K562 (cell line): ENCODE measurements at regions of chr10 and their contacts with region 1.

Region 1: GRCh38 chr10:77837240-77837924 is 89.2 kb downstream of the DLG5 start:
- DNase-seq: peak; percentile 62 to 84 (median 75)
- ATAC-seq: peak; percentile 88
- H3K4me3 ChIP-seq: no peak overlapping the region
- H3K27ac ChIP-seq: peak overlapping the region; percentile 93; the same call in 2 of the 3 replicates
- H3K4me1 ChIP-seq: peaks cover 21 to 31% of the 10 kb centered on the region in 2 experiments
- H3K27me3 ChIP-seq: no peaks in the 10 kb centered on the region
- CTCF ChIP-seq: peak; percentile 73 to 88 (median 88)
- EP300 ChIP-seq: no peak
- POLR2A ChIP-seq: no peak
- RAD21 ChIP-seq: peak; percentile 34 to 73

Region 2: GRCh38 chr10:77173615-77174461 is 663.5 kb before region 1 on chr10:
- CTCF ChIA-PET with region 1: no interaction called
- POLR2A ChIA-PET with region 1: no interaction called
- in situ Hi-C with region 1: no loop called
- intact Hi-C with region 1: loop called (anchors 5 kb)
- DNase-seq: peak; percentile 78 to 83 (median 81)
- ATAC-seq: peak; percentile 95
- H3K4me3 ChIP-seq: no peak overlapping the region
- H3K27ac ChIP-seq: no peak overlapping the region
- H3K4me1 ChIP-seq: no peaks in the 10 kb centered on the region
- H3K27me3 ChIP-seq: peaks cover 3 to 5% of the 10 kb centered on the region in 2 experiments; a peak in 3 of 5 replicates
- CTCF ChIP-seq: peak; percentile 90 to 96 (median 93)
- EP300 ChIP-seq: no peak
- POLR2A ChIP-seq: no peak
- RAD21 ChIP-seq: peak; percentile 77 to 87

Region 3: GRCh38 chr10:77721815-77722214 is 115.6 kb before region 1 on chr10:
- CTCF ChIA-PET with region 1: interaction called, 5 read pairs
- POLR2A ChIA-PET with region 1: no interaction called
- in situ Hi-C with region 1: no loop called
- intact Hi-C with region 1: loop called (anchors 1 kb)
- DNase-seq: no peak
- ATAC-seq: no peak
- H3K4me3 ChIP-seq: no peak overlapping the region
- H3K27ac ChIP-seq: no peak overlapping the region
- H3K4me1 ChIP-seq: no peaks in the 10 kb centered on the region
- H3K27me3 ChIP-seq: 0 out of 5 replicates have a peak, but pooled peaks cover 0 to 4% of the 10 kb centered on the region in 2 experiments
- CTCF ChIP-seq: no peak
- EP300 ChIP-seq: no peak
- POLR2A ChIP-seq: no peak
- RAD21 ChIP-seq: no peak

Region 4: GRCh38 chr10:77763453-77764430 is 73.6 kb before region 1 on chr10:
- CTCF ChIA-PET with region 1: no interaction called
- POLR2A ChIA-PET with region 1: no interaction called
- in situ Hi-C with region 1: no loop called
- intact Hi-C with region 1: loop called (anchors 2 kb)
- DNase-seq: peak in 3 of 4 experiments; percentile 9 to 19 (median 14)
- ATAC-seq: peak; percentile 84
- H3K4me3 ChIP-seq: no peak overlapping the region
- H3K27ac ChIP-seq: no peak overlapping the region
- H3K4me1 ChIP-seq: peaks cover 0 to 3% of the 10 kb centered on the region in 2 experiments; a peak in 1 of 5 replicates
- H3K27me3 ChIP-seq: peaks cover 9 to 10% of the 10 kb centered on the region in 2 experiments; a peak in 4 of 5 replicates
- CTCF ChIP-seq: peak; percentile 22 to 41 (median 26); a peak in 3 of 6 replicates
- EP300 ChIP-seq: no peak
- POLR2A ChIP-seq: no peak
- RAD21 ChIP-seq: no peak

Region 5: DNA sequence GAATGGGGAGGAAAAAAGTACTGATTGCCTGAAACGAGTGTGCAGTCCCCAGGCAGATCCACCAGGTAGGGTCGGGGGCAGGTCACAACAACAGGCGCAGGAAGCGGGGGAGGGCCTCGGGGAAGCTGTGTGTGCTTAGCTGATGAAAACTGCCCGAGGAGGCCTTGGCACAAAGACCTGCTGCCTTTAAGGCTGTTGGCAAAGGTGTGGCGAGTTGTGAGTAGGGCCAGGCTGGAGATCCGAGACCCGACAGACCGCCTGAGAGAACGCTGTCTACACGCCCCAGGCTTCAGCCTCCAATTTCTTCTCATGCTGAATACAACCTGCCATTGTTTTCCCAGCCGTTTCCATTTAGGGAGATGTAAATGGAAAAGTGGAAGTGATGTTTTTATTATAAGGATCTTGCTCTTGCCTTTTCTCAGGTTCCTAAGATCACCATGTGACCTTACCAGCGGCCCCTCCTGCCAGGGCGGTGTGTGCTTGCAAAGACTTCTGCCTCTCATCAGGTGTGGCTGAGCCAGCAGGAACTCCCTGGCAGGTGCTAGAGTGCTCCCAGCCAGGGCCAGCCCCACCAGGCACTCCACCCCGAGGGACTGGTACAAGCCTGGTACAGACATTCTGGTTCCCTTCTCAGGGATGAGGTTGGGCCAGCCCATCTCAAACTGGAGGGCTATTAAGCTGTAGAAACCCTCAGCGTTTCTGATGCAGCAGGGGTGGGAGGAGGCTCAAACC is 28.4 kb after region 1 on chr10:
- CTCF ChIA-PET with region 1: no interaction called
- POLR2A ChIA-PET with region 1: interaction called, 3 read pairs
- in situ Hi-C with region 1: no loop called
- intact Hi-C with region 1: loop called (anchors 1 kb)
- DNase-seq: no peak
- ATAC-seq: peak; percentile 54
- H3K4me3 ChIP-seq: no peak overlapping the region
- H3K27ac ChIP-seq: no peak overlapping the region
- H3K4me1 ChIP-seq: peaks cover 0 to 7% of the 10 kb centered on the region in 2 experiments; a peak in 2 of 5 replicates
- H3K27me3 ChIP-seq: no peaks in the 10 kb centered on the region
- CTCF ChIP-seq: no peak
- EP300 ChIP-seq: no peak
- POLR2A ChIP-seq: no peak
- RAD21 ChIP-seq: no peak